Right lobe of liver (tissue), 6 donors: ENCODE measurements at regions of chr5 and their contacts with region 1.

Region 1: GRCh38 chr5:141992349-141992963 is 20.4 kb downstream of the GNPDA1 start:
- DNase-seq: peak in 2 of 3 donors; percentile 50 to 76
- ATAC-seq: peak; percentile 81 to 85 (median 82)
- H3K4me3 ChIP-seq: no peak overlapping the region
- H3K27ac ChIP-seq: no peak overlapping the region
- H3K4me1 ChIP-seq: peaks cover 0 to 7% (median 2%) of the 10 kb centered on the region in 4 donors
- H3K27me3 ChIP-seq: no peaks in the 10 kb centered on the region
- CTCF ChIP-seq: peak; percentile 84 to 93 (median 86)
- POLR2A ChIP-seq: no peak

Region 2: GRCh38 chr5:142145106-142145900 is 152.8 kb after region 1 on chr5:
- intact Hi-C with region 1: loop called (anchors 5 to 10 kb)
- DNase-seq: peak in 1 of 3 donors; percentile 57
- ATAC-seq: peak; percentile 84 to 88 (median 86)
- H3K4me3 ChIP-seq: no peak overlapping the region
- H3K27ac ChIP-seq: no peak overlapping the region
- H3K4me1 ChIP-seq: peaks cover 0 to 8% (median 0%) of the 10 kb centered on the region in 4 donors
- H3K27me3 ChIP-seq: no peaks in the 10 kb centered on the region
- CTCF ChIP-seq: peak; percentile 68 to 73 (median 69)
- POLR2A ChIP-seq: no peak